ENCODE measurements at regions of chr12 and their contacts with region 1.

Region 1: DNA sequence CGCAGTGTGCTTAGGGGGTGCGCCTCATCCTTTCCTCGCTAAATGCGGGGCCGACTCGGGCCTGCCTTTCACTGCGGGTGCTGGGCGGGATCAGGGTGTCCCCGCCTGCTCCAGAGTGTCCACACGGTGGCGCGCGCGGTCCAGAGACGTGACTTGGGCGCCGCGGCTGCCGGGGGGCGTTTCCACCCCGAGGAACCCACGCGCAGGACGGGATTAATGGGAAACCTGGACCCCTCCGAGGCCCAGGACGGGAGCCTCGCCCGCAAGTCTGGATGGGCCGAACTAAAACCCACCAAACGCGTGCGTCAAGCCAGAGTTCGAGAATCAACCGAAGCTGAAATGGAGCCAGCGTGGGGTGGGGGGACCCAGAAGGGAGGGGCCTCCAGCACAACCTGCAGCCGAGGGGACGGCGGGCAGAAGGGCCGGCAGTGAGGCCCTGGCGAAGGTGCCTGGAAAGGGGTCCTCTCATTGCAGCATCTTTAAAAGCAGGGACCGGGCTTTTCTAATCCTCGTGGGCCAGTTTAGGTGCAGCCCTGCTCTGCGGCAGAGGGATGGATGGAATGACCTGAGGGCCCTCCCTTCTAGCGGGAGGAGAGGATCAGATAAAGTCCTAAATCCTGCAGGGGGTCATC is 93.3 kb downstream of the NINJ2 start:
- DNase-seq: peak; percentile 93 to 94
- ATAC-seq: peak; percentile 68 to 83 (median 78)
- H3K4me3 ChIP-seq: peak overlapping the region; percentile 79
- H3K27ac ChIP-seq: peak overlapping the region; percentile 95
- H3K4me1 ChIP-seq: peaks cover 17% of the 10 kb centered on the region
- H3K27me3 ChIP-seq: no peaks in the 10 kb centered on the region
- CTCF ChIP-seq: peak; percentile 97

Region 2: DNA sequence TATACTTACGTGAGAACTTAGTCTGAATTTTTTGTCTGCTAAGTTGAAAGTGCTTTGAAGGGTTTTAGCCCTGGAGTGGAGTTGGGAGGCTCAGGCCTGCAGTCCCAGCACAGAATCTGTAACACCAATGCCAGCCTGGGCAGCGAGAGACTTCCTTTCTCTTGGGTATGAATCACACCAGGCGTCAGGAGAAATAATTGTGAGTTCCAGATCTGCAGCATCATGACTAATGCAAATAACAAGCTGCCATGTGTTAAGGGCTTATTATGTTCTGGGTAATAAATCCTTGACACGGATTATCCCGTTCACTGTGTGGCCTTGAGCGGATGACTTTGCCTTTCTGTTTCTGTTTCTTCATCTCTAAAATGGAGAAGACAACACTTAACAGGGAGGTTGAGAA is 39.6 kb before region 1 on chr12:
- intact Hi-C with region 1: no loop called
- DNase-seq: no peak
- ATAC-seq: peak; percentile 14 to 88 (median 71)
- H3K4me3 ChIP-seq: no peak overlapping the region
- H3K27ac ChIP-seq: peak overlapping the region; percentile 30
- H3K4me1 ChIP-seq: no peaks in the 10 kb centered on the region
- H3K27me3 ChIP-seq: peaks cover 0 to 4% (median 0%) of the 10 kb centered on the region in 3 donors
- CTCF ChIP-seq: no peak

Region 3: GRCh38 chr12:701896-702539 is 132.1 kb after region 1 on chr12:
- intact Hi-C with region 1: no loop called
- DNase-seq: no peak
- ATAC-seq: no peak
- H3K4me3 ChIP-seq: no peak overlapping the region
- H3K27ac ChIP-seq: no peak overlapping the region
- H3K4me1 ChIP-seq: peaks cover 13% of the 10 kb centered on the region
- H3K27me3 ChIP-seq: no peaks in the 10 kb centered on the region
- CTCF ChIP-seq: no peak

Region 4: GRCh38 chr12:810671-811415 is 240.9 kb after region 1 on chr12:
- intact Hi-C with region 1: loop called (anchors 2 to 5 kb)
- DNase-seq: no peak
- ATAC-seq: no peak
- H3K4me3 ChIP-seq: no peak overlapping the region
- H3K27ac ChIP-seq: peak overlapping the region; percentile 12
- H3K4me1 ChIP-seq: peaks cover 36% of the 10 kb centered on the region
- H3K27me3 ChIP-seq: no peaks in the 10 kb centered on the region
- CTCF ChIP-seq: no peak

Region 5: DNA sequence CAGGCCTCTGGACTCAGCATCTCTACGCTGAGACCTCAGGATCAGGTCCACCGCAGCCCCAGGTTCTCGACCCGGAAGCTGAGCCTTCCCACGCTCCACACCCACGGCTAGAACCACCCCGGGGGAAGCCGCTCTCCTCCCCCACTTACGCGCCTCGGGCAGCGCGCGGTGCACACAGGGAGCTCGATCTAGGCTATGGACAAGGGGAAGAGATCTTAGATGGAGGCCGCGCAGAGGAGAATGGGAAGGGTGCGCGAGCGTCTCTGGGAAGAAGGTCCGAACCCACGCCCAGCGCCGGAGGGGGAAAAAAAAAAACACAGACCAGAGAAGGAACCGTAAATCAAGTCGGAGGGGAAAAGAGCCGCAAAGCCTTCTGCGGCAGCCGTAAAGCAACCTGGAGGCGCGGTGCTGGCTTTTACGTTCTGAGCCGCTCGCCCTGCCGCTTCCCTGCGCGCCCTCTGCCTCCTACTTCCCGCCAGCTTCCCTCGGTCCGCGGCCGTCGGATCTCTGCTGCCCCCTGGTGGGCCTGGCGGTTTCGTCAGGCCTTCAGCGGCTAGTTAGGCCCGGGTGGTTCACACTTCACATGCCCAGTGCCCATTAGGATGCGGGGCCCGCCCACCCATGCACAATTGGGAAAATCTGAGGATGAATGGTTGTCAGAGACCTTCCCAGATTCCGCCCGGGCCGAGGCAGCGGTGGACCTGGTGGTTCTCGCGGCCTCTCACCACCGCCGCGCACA is 379.7 kb after region 1 on chr12 and contains the start of gene RAD52:
- intact Hi-C with region 1: loop called (anchors 2 to 5 kb)
- DNase-seq: peak; percentile 98 to 99
- ATAC-seq: peak; percentile 93 to 94 (median 94)
- H3K4me3 ChIP-seq: peak within 1 kb of the TSS; percentile 95
- H3K27ac ChIP-seq: peak within 1 kb of the TSS; percentile 97
- H3K4me1 ChIP-seq: peaks cover 21% of the 10 kb centered on the region
- H3K27me3 ChIP-seq: no peaks in the 10 kb centered on the region
- CTCF ChIP-seq: peak; percentile 99
- total RNA-seq, gene RAD52: 6.7 to 12.8 (median 9.2) TPM

Region 6: GRCh38 chr12:1093166-1093751 is 523.3 kb after region 1 on chr12:
- intact Hi-C with region 1: loop called in 1 of 2 experiments (anchors 10 kb)
- DNase-seq: no peak
- ATAC-seq: peak in 2 of 4 donors; percentile 53 to 59
- H3K4me3 ChIP-seq: no peak overlapping the region
- H3K27ac ChIP-seq: no peak overlapping the region
- H3K4me1 ChIP-seq: peaks cover 7% of the 10 kb centered on the region
- H3K27me3 ChIP-seq: no peaks in the 10 kb centered on the region
- CTCF ChIP-seq: peak; percentile 63

Region 7: DNA sequence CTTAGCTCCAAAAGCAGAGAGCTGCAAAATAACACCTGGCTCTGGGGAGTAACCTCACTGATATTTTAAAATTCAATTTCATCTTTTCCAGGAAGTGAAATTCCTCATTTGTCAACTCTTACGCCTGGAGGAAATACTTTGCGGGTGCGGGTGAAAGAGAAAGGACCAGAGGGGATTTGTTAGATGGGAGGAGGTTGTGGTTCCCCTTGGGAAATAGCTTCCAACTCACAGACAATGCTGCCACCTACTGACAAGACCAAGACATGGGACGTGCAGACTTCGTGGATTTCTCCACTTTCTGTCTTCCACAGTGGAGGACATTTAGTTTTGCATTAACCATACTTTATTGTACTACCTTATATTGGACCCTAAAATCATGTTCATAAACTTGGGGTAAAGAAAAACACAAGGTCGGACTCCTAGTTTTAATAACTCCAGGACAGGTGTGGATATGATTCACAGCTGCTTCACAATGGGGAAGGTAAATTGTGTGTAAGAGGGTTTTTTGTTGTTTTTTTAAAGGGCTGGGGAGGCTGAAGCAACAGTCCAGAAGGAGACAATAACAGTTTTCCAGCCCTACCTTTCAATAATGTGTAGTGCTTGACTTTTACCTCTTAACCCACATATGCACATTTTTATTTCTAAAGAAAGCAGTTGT is 1013.6 kb after region 1 on chr12:
- intact Hi-C with region 1: loop called (anchors 5 to 10 kb)
- DNase-seq: peak in 1 of 2 donors; percentile 31
- ATAC-seq: peak; percentile 80 to 92 (median 84)
- H3K4me3 ChIP-seq: peak overlapping the region; percentile 37
- H3K27ac ChIP-seq: no peak overlapping the region
- H3K4me1 ChIP-seq: peaks cover 8% of the 10 kb centered on the region
- H3K27me3 ChIP-seq: no peaks in the 10 kb centered on the region
- CTCF ChIP-seq: peak; percentile 87